PC-9 (cell line): ENCODE measurements at regions of chr4 and their contacts with region 1.

Region 1: GRCh38 chr4:76896731-76897535 is 1.0 kb downstream of the SOWAHB start:
- DNase-seq: peak in 1 of 2 experiments; percentile 44
- H3K4me3 ChIP-seq: peak overlapping the region; percentile 76
- H3K27ac ChIP-seq: peak overlapping the region; percentile 68; the same call in 1 of the 2 replicates
- H3K4me1 ChIP-seq: peaks cover 38% of the 10 kb centered on the region
- H3K27me3 ChIP-seq: no peaks in the 10 kb centered on the region
- CTCF ChIP-seq: no peak

Region 2: DNA sequence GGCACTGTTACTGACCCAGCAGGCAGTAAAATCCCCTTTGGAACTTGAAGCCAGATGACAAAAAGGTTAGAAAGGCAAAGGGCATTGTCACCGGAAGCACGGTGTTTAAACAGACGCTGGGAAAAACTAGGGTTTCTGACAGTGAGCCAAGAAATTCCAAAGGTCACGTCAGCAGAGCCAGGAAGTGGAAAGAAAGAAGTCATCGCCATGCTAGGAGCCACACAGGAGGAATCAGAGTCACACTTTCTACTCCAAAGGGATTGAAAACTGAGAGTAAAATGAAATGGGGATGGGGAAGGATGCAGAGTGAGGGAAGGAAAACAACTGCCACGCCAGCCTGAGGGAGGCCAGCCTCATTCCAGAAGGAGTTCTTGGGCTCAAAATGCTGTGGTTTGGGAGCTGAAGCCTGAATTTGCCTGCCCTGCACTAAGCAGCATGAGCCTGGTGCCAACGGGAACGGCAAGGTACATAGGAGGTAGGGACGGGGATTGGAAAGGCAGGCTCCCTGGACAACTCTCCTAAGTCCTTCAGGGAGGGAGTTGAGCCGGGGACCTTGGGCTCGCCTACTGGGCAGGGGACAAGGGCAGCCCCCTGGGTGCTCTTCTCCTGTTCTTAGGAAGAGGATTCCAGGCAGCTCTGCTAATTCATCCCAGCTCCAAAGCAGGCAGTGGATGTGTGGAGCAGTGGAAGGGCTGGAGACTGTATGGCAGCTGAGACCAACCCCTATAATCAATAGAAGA is 65.8 kb before region 1 on chr4:
- CTCF ChIA-PET with region 1: no interaction called
- POLR2A ChIA-PET with region 1: interaction called, 8 read pairs
- intact Hi-C with region 1: loop called (anchors 5 kb)
- DNase-seq: peak; percentile 26 to 71
- H3K4me3 ChIP-seq: peak overlapping the region; percentile 33; the same call in 1 of the 2 replicates
- H3K27ac ChIP-seq: peak overlapping the region; percentile 42; the same call in 1 of the 2 replicates
- H3K4me1 ChIP-seq: peaks cover 16% of the 10 kb centered on the region
- H3K27me3 ChIP-seq: no peaks in the 10 kb centered on the region
- CTCF ChIP-seq: no peak

Region 3: DNA sequence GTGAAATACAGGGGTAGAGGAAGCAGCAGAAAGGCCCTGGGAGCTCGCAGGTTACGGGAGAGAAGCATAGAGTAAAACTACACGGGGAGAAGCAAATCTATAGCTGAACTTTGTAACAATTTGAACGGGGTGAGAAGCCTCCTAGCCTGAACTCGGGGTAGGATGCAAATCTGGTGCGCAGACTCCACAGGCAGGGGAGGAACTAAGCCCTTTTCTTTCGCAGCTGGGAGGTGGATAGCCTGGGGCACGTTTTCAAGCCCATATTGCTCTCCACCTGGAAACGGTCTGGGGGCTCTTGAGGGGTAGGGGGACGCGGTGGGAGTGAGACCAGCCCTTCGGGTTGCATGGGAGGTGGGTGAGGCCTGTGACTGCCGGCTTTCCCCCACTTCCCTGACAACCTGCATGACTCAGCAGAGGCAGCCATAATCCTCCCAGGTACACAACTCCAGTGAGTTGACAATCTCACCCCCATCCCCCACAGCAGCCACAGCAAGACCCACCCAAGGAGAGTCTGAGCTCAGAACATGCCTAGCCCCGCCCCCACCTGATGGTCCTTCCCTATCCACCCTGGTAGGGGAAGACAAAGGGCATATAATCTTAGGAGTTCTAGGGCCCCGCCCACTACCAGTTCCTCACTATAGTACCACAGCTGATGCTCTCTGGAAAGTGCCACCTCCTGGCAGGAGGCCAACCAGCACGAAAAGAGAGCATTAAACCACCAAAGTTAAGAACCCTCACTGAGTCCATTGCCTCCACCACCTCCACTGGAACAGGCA is 28.9 kb before region 1 on chr4:
- CTCF ChIA-PET with region 1: no interaction called
- POLR2A ChIA-PET with region 1: no interaction called
- intact Hi-C with region 1: loop called (anchors 2 kb)
- DNase-seq: peak; percentile 79 to 82
- H3K4me3 ChIP-seq: peak overlapping the region; percentile 38; the same call in 1 of the 2 replicates
- H3K27ac ChIP-seq: peak overlapping the region; percentile 75
- H3K4me1 ChIP-seq: peaks cover 5% of the 10 kb centered on the region; the same call in 1 of the 2 replicates
- H3K27me3 ChIP-seq: no peaks in the 10 kb centered on the region
- CTCF ChIP-seq: no peak

Region 4: GRCh38 chr4:76949276-76950051 is 52.5 kb after region 1 on chr4 and contains the start of gene SEPTIN11:
- CTCF ChIA-PET with region 1: no interaction called
- POLR2A ChIA-PET with region 1: no interaction called
- intact Hi-C with region 1: loop called (anchors 1 kb)
- DNase-seq: peak; percentile 67 to 85
- H3K4me3 ChIP-seq: peak within 1 kb of the TSS; percentile 70
- H3K27ac ChIP-seq: peak within 1 kb of the TSS; percentile 51
- H3K4me1 ChIP-seq: peaks cover 14% of the 10 kb centered on the region; the same call in 1 of the 2 replicates
- H3K27me3 ChIP-seq: no peaks in the 10 kb centered on the region
- CTCF ChIP-seq: no peak
- total RNA-seq, gene SEPTIN11: 38.8 and 48.1 TPM in 2 replicates